ENCODE measurements at regions of chr2 and their contacts with region 1.

Region 1: GRCh38 chr2:28958689-28959088 is 22.4 kb upstream of the TOGARAM2 start:
- DNase-seq: peak; percentile 11
- H3K4me3 Mint-ChIP-seq: no peak overlapping the region
- H3K27ac Mint-ChIP-seq: no peak overlapping the region
- H3K4me1 Mint-ChIP-seq: no peaks in the 10 kb centered on the region
- H3K27me3 Mint-ChIP-seq: peaks cover 14% of the 10 kb centered on the region

Region 2: DNA sequence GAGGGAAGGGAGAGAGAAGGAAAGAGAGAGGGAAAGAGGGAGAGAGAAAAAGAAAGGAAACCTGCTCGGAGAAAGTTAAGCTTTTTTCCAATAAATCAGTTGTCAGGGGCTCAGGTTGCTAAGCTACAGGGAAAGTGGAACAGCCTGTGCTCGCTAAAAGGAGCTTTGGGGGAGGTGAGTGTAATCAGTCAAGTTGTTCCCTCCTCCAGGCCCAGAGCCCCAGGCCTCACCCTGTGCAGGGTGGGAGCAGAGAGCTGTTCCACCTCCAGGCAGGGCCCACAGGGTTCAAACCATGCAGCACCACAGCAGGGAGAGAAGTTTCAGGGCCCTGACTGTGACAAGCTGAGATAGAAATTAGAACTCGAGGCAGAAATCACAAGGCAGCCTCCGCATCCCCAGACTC is 263.4 kb before region 1 on chr2:
- intact Hi-C with region 1: no loop called
- DNase-seq: no peak
- H3K4me3 Mint-ChIP-seq: no peak overlapping the region
- H3K27ac Mint-ChIP-seq: peak overlapping the region; percentile 35
- H3K4me1 Mint-ChIP-seq: no peaks in the 10 kb centered on the region
- H3K27me3 Mint-ChIP-seq: no peaks in the 10 kb centered on the region

Region 3: DNA sequence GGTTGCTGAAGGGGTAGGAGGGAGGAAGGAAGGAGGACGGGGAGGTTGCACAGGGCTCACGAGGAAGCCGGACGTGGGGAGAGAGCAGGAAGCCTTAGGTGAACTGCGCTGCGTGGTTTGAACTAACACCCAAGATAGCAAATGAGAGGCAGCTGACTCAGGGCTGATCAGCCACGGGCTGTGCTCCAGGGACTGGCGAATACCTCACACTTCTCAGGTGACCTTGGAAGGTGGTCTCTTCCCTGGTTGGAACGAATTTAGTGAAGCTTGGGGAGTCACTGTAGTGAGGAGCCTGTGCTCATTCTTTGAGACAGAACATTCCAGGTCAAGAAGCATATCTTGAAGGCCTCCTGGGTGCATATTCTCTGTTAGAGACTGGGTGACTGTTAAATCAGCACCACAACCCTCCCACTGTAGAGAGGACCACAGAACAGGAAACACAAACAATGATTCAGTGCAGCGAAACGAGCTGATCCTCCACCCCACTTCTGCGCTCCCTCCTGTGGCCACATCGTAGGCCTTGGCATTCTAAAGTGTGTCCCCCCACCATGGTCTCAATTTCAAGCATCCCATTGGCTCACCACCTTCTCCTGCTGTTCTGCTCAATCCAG is 56.2 kb after region 1 on chr2:
- intact Hi-C with region 1: loop called (anchors 1 kb)
- DNase-seq: peak; percentile 65
- H3K4me3 Mint-ChIP-seq: peak overlapping the region; percentile 88
- H3K27ac Mint-ChIP-seq: peak overlapping the region; percentile 99
- H3K4me1 Mint-ChIP-seq: peaks cover 65% of the 10 kb centered on the region
- H3K27me3 Mint-ChIP-seq: peaks cover 2% of the 10 kb centered on the region

Region 4: GRCh38 chr2:29196792-29197788 is 238.4 kb after region 1 on chr2:
- intact Hi-C with region 1: loop called (anchors 1 kb)
- DNase-seq: peak; percentile 67
- H3K4me3 Mint-ChIP-seq: no peak overlapping the region
- H3K27ac Mint-ChIP-seq: no peak overlapping the region
- H3K4me1 Mint-ChIP-seq: no peaks in the 10 kb centered on the region
- H3K27me3 Mint-ChIP-seq: peaks cover 2% of the 10 kb centered on the region

Region 5: GRCh38 chr2:29841386-29842004 is 882.8 kb after region 1 on chr2:
- intact Hi-C with region 1: loop called (anchors 2 kb)
- DNase-seq: no peak
- H3K4me3 Mint-ChIP-seq: no peak overlapping the region
- H3K27ac Mint-ChIP-seq: no peak overlapping the region
- H3K4me1 Mint-ChIP-seq: no peaks in the 10 kb centered on the region
- H3K27me3 Mint-ChIP-seq: peaks cover 5% of the 10 kb centered on the region

Region 6: DNA sequence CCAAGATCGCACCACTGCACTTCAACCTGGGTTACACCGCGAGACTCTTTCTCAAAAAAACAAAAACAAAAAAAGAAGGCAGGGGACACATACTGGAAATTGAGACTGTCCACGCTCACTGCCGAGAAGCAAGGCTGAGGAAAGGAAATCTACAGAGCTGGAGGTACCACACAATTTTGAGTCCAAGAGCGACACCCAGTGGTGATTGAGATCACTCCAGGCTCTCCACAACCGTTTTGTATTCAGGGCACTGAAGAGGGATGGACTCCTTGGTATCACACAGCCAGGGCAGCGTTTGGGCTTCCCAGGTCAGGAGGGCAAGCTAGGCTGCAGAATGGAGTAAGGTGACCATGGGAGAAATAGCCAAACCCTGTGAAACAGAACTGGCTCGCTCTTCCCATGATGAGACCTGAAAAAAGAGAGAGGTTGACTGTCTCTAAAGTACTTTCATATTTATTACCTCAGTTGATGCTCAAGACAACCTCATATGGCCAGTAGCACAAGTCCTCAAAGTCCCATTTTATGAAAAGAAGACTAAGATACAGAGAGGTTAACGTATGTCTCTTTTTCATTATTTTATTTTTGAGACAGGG is 1113.7 kb after region 1 on chr2:
- intact Hi-C with region 1: loop called (anchors 1 kb)
- DNase-seq: peak; percentile 49
- H3K4me3 Mint-ChIP-seq: no peak overlapping the region
- H3K27ac Mint-ChIP-seq: no peak overlapping the region
- H3K4me1 Mint-ChIP-seq: no peaks in the 10 kb centered on the region
- H3K27me3 Mint-ChIP-seq: peaks cover 9% of the 10 kb centered on the region